Activated CD4-positive, alpha-beta memory T cell treated with anti-CD3 and anti-CD28 coated beads for 36 hours (primary cell): ENCODE measurements at regions of chr15 and their contacts with region 1.

Region 1: GRCh38 chr15:44501768-44502366 is 35.1 kb upstream of the EIF3J start:
- DNase-seq: no peak
- H3K4me3 Mint-ChIP-seq: no peak overlapping the region
- H3K27ac Mint-ChIP-seq: peak overlapping the region; percentile 48
- H3K4me1 Mint-ChIP-seq: peaks cover 22% of the 10 kb centered on the region
- H3K27me3 Mint-ChIP-seq: no peaks in the 10 kb centered on the region

Region 2: GRCh38 chr15:44286814-44287452 is 214.9 kb before region 1 on chr15:
- CTCF ChIA-PET with region 1: interaction called, 14 read pairs
- POLR2A ChIA-PET with region 1: no interaction called
- intact Hi-C with region 1: no loop called
- DNase-seq: no peak
- H3K4me3 Mint-ChIP-seq: peak overlapping the region; percentile 86
- H3K27ac Mint-ChIP-seq: peak overlapping the region; percentile 50
- H3K4me1 Mint-ChIP-seq: peaks cover 36% of the 10 kb centered on the region
- H3K27me3 Mint-ChIP-seq: peaks cover 3% of the 10 kb centered on the region

Region 3: GRCh38 chr15:44468713-44469385 is 33.0 kb before region 1 on chr15:
- CTCF ChIA-PET with region 1: interaction called, 6 read pairs
- POLR2A ChIA-PET with region 1: interaction called, 3 read pairs
- intact Hi-C with region 1: loop called (anchors 5 kb)
- DNase-seq: no peak
- H3K4me3 Mint-ChIP-seq: no peak overlapping the region
- H3K27ac Mint-ChIP-seq: peak overlapping the region; percentile 7
- H3K4me1 Mint-ChIP-seq: peaks cover 17% of the 10 kb centered on the region
- H3K27me3 Mint-ChIP-seq: no peaks in the 10 kb centered on the region

Region 4: DNA sequence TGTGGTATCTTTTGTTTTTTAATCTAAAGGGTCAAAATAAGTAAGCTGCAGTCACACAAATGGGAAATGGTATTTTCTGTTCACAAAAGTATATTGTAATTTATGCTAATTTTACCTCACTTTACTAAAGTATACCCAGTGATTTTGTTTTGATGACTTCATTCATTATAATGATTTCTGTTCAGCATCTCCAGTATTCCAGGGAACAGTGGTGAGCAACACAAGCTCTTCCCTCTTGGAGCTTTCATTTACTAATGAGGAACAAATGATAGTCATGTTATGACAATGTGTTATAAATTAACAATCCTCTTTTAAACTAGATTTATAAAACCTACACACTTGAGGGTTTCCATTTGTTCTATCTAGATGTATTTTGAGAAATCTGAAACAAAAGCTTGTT is 14.6 kb after region 1 on chr15:
- CTCF ChIA-PET with region 1: interaction called, 11 read pairs
- POLR2A ChIA-PET with region 1: no interaction called
- intact Hi-C with region 1: no loop called
- DNase-seq: no peak
- H3K4me3 Mint-ChIP-seq: no peak overlapping the region
- H3K27ac Mint-ChIP-seq: no peak overlapping the region
- H3K4me1 Mint-ChIP-seq: peaks cover 3% of the 10 kb centered on the region
- H3K27me3 Mint-ChIP-seq: no peaks in the 10 kb centered on the region